PC-9 (cell line): ENCODE measurements at regions of chr12 and their contacts with region 1.

Region 1: DNA sequence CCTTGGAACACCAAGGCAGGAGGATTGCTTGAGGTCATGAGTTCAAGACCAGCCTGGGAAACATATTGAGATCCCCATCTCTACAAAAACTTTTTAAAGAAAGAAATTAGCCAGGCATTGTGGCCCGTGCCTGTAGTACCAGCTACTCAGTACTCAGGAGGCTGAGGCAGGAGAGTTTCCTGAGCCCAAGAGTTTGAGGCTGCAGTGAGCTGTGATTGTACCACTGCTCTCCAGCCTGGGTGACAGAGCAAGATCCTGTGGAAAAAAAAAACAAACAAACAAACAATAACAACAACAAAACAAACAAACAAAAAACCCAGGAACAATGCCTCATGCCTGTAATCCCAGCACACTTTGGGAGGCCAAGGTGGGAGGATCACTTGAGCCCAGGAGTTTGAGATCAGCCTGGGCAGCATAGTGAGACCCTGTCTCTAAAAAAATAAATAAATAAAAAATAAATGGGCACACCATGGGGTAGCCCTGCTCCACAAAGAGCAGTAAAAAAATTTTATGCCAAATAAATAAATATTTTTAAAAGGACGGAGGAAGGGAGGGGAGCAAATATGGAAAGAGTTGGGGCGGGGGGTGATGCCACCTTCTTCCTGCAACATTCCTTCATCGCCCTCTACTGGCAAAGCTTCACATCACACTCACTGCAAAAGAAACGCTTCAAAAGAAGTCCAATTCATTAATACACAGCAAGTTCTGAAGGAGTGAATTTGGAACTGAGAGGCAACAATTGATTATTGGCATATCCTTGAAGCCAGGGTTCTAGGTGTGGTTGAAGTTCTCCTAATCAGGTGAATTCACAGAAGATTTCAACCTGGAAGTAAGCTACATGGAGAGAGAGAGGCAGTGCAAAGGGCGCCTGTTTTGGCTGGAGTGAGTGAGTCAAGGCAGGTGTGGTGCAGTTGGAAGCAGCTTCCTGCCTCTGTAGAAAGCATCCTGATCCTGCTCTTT is 8.8 kb upstream of the GNPTAB start:
- DNase-seq: peak in 1 of 2 experiments; percentile 46
- H3K4me3 ChIP-seq: no peak overlapping the region
- H3K27ac ChIP-seq: no peak overlapping the region
- H3K4me1 ChIP-seq: peaks cover 7% of the 10 kb centered on the region; the same call in 1 of the 2 replicates
- H3K27me3 ChIP-seq: no peaks in the 10 kb centered on the region
- CTCF ChIP-seq: peak; percentile 90

Region 2: GRCh38 chr12:101414533-101415119 is 425.0 kb before region 1 on chr12:
- CTCF ChIA-PET with region 1: no interaction called
- POLR2A ChIA-PET with region 1: no interaction called
- intact Hi-C with region 1: loop called (anchors 2 kb)
- DNase-seq: peak; percentile 29 to 62
- H3K4me3 ChIP-seq: no peak overlapping the region
- H3K27ac ChIP-seq: no peak overlapping the region
- H3K4me1 ChIP-seq: peaks cover 8% of the 10 kb centered on the region
- H3K27me3 ChIP-seq: no peaks in the 10 kb centered on the region
- CTCF ChIP-seq: peak; percentile 76

Region 3: GRCh38 chr12:103697971-103698751 is 1858.6 kb after region 1 on chr12:
- CTCF ChIA-PET with region 1: interaction called, 11 read pairs
- POLR2A ChIA-PET with region 1: no interaction called
- intact Hi-C with region 1: no loop called
- DNase-seq: no peak
- H3K4me3 ChIP-seq: no peak overlapping the region
- H3K27ac ChIP-seq: no peak overlapping the region
- H3K4me1 ChIP-seq: no peaks in the 10 kb centered on the region
- H3K27me3 ChIP-seq: peaks cover 49% of the 10 kb centered on the region
- CTCF ChIP-seq: no peak